ENCODE measurements at regions of chr1 and their contacts with region 1.

Region 1: GRCh38 chr1:24502709-24503058 is at the start of gene RCAN3:
- DNase-seq: peak; percentile 78 to 95 (median 88)
- ATAC-seq: peak; percentile 63
- H3K4me3 ChIP-seq: peak within 1 kb of the TSS; percentile 73 to 76
- H3K4me3 Mint-ChIP-seq: peak within 1 kb of the TSS; percentile 99
- H3K27ac ChIP-seq: peak within 1 kb of the TSS; percentile 82 to 95
- H3K27ac Mint-ChIP-seq: peak within 1 kb of the TSS; percentile 99
- H3K4me1 ChIP-seq: peaks cover 47% of the 10 kb centered on the region
- H3K4me1 Mint-ChIP-seq: peaks cover 70% of the 10 kb centered on the region
- H3K27me3 ChIP-seq: no peaks in the 10 kb centered on the region
- H3K27me3 Mint-ChIP-seq: no peaks in the 10 kb centered on the region
- CTCF ChIP-seq: no peak
- total RNA-seq, gene RCAN3: 129 to 130 TPM

Region 2: DNA sequence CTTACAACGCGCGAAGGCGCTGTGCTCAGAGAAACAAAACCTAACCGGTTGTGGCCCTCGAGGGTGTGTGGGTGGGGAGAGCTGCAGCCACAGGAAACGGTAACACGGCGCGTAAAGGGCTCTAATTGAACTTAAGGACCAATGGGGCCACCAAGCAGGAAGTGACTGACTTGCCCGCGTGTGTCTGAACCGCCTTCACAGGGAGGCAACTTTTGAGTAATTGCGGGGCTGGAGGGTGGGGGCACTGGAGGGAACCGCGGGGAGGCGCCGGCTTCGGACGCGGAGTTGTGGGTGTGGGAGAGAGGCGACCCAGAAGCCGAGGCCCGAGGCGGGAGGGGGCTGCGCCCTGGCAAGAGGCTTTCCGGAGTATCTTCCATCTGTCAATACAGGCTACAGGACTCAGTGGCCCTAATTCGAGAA is 543.6 kb before region 1 on chr1:
- CTCF ChIA-PET with region 1: no interaction called
- POLR2A ChIA-PET with region 1: no interaction called
- intact Hi-C with region 1: loop called in 1 of 2 experiments (anchors 2 kb)
- DNase-seq: peak; percentile 76 to 98 (median 90)
- ATAC-seq: peak; percentile 79
- H3K4me3 ChIP-seq: peak overlapping the region; percentile 83 to 97
- H3K4me3 Mint-ChIP-seq: peak overlapping the region; percentile 100
- H3K27ac ChIP-seq: peak overlapping the region; percentile 95
- H3K27ac Mint-ChIP-seq: peak overlapping the region; percentile 100
- H3K4me1 ChIP-seq: peaks cover 32% of the 10 kb centered on the region
- H3K4me1 Mint-ChIP-seq: peaks cover 59% of the 10 kb centered on the region
- H3K27me3 ChIP-seq: no peaks in the 10 kb centered on the region
- H3K27me3 Mint-ChIP-seq: no peaks in the 10 kb centered on the region
- CTCF ChIP-seq: peak; percentile 34

Region 3: GRCh38 chr1:24481101-24481500 is 21.6 kb before region 1 on chr1:
- CTCF ChIA-PET with region 1: interaction called, 24 read pairs
- POLR2A ChIA-PET with region 1: interaction called, 148 read pairs
- intact Hi-C with region 1: loop called (anchors 1 kb)
- DNase-seq: peak in 7 of 9 experiments; percentile 24 to 78 (median 61)
- ATAC-seq: peak; percentile 59
- H3K4me3 ChIP-seq: peak overlapping the region in 1 of 2 experiments; percentile 40
- H3K4me3 Mint-ChIP-seq: peak overlapping the region; percentile 73
- H3K27ac ChIP-seq: peak overlapping the region; percentile 67 to 68
- H3K27ac Mint-ChIP-seq: peak overlapping the region; percentile 98
- H3K4me1 ChIP-seq: peaks cover 64% of the 10 kb centered on the region
- H3K4me1 Mint-ChIP-seq: peaks cover 65% of the 10 kb centered on the region
- H3K27me3 ChIP-seq: no peaks in the 10 kb centered on the region
- H3K27me3 Mint-ChIP-seq: no peaks in the 10 kb centered on the region
- CTCF ChIP-seq: no peak

Region 4: DNA sequence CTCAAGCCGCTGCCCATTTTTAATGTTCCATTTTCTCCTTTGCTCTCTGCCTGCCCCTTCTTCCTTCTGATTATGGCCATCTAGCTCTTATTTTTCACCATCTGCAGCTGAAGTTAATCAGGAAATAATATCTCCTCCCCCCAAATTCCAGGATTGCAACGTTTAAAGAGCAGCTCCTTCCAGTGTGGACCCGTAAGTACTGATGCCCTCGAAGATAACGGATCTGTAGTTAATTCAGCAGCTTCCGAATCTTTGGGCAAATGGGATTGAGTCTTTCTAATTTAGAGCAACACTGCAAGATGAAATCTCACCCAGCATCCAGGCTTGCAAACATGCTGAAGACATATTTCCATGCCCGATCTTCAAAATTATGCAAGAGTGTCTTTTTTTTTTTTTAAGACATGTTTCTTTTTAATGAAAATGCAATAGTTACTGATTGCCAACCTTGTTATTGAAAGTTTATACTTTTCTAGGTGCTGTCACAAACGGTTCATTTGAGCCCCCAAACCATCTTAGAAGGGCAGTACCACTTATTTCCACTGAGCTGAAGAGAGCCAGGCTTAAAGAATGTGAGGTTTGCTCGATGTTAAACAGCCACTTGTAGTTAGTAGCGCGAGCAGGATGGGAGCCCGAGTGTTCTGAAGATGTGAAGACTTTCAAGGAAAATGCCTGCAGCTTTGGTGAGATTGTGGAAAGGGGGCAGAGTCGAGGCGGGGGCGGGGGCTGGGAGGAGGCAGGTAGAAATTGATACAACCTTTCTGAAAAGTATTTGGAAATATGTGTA is 10.9 kb before region 1 on chr1:
- CTCF ChIA-PET with region 1: interaction called, 24 read pairs
- POLR2A ChIA-PET with region 1: interaction called, 54 read pairs
- intact Hi-C with region 1: loop called in 1 of 2 experiments (anchors 1 kb)
- DNase-seq: no peak
- ATAC-seq: peak; percentile 59
- H3K4me3 ChIP-seq: no peak overlapping the region
- H3K4me3 Mint-ChIP-seq: no peak overlapping the region
- H3K27ac ChIP-seq: no peak overlapping the region
- H3K27ac Mint-ChIP-seq: no peak overlapping the region
- H3K4me1 ChIP-seq: peaks cover 35% of the 10 kb centered on the region
- H3K4me1 Mint-ChIP-seq: peaks cover 30% of the 10 kb centered on the region
- H3K27me3 ChIP-seq: no peaks in the 10 kb centered on the region
- H3K27me3 Mint-ChIP-seq: peaks cover 2% of the 10 kb centered on the region
- CTCF ChIP-seq: no peak

Region 5: DNA sequence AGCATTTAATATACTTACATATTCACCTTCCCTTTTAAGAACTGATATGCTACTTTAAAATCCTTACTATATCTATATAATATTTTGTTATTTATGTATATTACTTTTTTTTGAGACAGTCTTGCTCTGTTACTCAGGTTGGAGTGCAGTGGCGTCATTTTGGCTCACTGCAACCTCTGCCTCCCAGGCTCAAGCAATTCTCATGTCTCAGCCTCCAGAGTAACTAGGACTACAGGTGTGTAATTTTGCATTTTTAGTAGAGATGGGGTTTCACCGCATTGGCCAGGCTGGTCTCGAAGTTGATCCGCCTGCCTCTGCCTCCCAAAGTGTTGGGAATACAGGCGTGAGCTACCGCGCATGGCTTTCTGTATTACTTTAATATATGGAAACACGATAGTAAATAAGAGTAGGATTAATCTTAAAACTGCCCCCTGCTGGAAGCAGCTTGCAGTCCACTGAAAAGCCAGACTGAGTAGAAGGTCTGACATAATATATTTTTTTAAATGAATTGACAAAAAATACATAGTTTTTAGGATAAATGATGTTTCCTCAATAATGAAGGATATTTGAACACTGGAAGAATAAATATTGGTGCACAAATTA is 24.4 kb after region 1 on chr1:
- CTCF ChIA-PET with region 1: interaction called, 21 read pairs
- POLR2A ChIA-PET with region 1: interaction called, 9 read pairs
- intact Hi-C with region 1: loop called in 1 of 2 experiments (anchors 2 kb)
- DNase-seq: peak in 7 of 9 experiments; percentile 13 to 72 (median 58)
- ATAC-seq: peak; percentile 81
- H3K4me3 ChIP-seq: no peak overlapping the region
- H3K4me3 Mint-ChIP-seq: no peak overlapping the region
- H3K27ac ChIP-seq: no peak overlapping the region
- H3K27ac Mint-ChIP-seq: peak overlapping the region; percentile 85
- H3K4me1 ChIP-seq: peaks cover 63% of the 10 kb centered on the region
- H3K4me1 Mint-ChIP-seq: peaks cover 63% of the 10 kb centered on the region
- H3K27me3 ChIP-seq: no peaks in the 10 kb centered on the region
- H3K27me3 Mint-ChIP-seq: no peaks in the 10 kb centered on the region
- CTCF ChIP-seq: peak; percentile 61

Region 6: DNA sequence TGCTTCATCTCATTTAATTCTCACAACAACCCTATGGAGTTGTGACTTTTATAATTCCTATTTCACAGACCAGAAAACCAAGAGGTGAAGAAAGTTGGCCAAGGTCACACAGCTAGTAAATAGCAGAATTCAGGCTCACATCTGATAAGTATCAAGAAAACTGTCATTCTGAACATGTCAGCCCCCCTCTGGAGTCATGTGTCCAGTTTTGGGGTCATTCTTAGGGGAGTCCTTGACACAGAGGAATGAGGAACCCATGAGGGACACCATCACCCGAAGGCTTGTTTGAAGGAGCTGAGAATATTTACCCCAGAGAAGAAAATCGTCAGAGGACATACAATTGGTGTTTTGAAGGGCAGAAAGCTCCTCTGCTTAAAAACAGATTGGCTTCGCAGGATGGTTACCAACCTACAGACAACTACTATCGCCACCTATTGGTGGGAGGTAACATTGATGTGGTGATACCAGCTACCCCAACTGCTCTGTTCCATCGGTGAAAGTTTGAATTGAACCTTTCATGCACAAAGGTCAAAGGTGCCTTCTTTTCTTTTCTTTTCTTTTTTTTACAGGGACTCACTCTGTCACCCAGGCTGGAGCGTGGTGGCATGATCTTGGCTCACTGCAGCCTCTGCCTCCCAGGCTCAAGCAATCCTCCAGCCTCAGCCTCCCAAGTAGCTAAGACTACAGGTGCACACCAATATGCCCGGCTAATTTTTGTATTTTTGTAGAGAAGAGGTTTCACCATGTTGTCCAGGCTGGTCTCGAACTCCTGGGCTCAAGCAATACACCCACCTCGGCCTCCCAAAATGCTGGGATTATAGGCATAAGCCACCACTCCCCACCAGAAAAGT is 84.5 kb after region 1 on chr1:
- CTCF ChIA-PET with region 1: interaction called, 9 read pairs
- POLR2A ChIA-PET with region 1: interaction called, 5 read pairs
- intact Hi-C with region 1: loop called in 1 of 2 experiments (anchors 2 kb)
- DNase-seq: peak in 8 of 9 experiments; percentile 10 to 88 (median 58)
- ATAC-seq: peak; percentile 99
- H3K4me3 ChIP-seq: no peak overlapping the region
- H3K4me3 Mint-ChIP-seq: peak overlapping the region; percentile 11
- H3K27ac ChIP-seq: peak overlapping the region; percentile 27 to 30
- H3K27ac Mint-ChIP-seq: peak overlapping the region; percentile 92
- H3K4me1 ChIP-seq: peaks cover 5% of the 10 kb centered on the region
- H3K4me1 Mint-ChIP-seq: peaks cover 6% of the 10 kb centered on the region
- H3K27me3 ChIP-seq: no peaks in the 10 kb centered on the region
- H3K27me3 Mint-ChIP-seq: no peaks in the 10 kb centered on the region
- CTCF ChIP-seq: peak; percentile 92

Region 7: GRCh38 chr1:24744911-24745710 is 242.4 kb after region 1 on chr1 and contains the start of gene CLIC4:
- CTCF ChIA-PET with region 1: no interaction called
- POLR2A ChIA-PET with region 1: no interaction called
- intact Hi-C with region 1: loop called in 1 of 2 experiments (anchors 10 kb)
- DNase-seq: peak; percentile 97 to 100 (median 99)
- ATAC-seq: peak; percentile 92
- H3K4me3 ChIP-seq: peak within 1 kb of the TSS; percentile 52 to 54
- H3K4me3 Mint-ChIP-seq: peak within 1 kb of the TSS; percentile 86
- H3K27ac ChIP-seq: no peak within 1 kb of the TSS
- H3K27ac Mint-ChIP-seq: peak within 1 kb of the TSS; percentile 72
- H3K4me1 ChIP-seq: peaks cover 8% of the 10 kb centered on the region
- H3K4me1 Mint-ChIP-seq: peaks cover 27% of the 10 kb centered on the region
- H3K27me3 ChIP-seq: peaks cover 0 to 3% of the 10 kb centered on the region in 2 experiments
- H3K27me3 Mint-ChIP-seq: peaks cover 6% of the 10 kb centered on the region
- CTCF ChIP-seq: no peak
- total RNA-seq, gene CLIC4: 1.2 to 1.3 TPM

Measured in CD8-positive, alpha-beta T cell (primary cell).